RWPE1 (cell line): ENCODE measurements at regions of chr1 and their contacts with region 1.

Region 1: DNA sequence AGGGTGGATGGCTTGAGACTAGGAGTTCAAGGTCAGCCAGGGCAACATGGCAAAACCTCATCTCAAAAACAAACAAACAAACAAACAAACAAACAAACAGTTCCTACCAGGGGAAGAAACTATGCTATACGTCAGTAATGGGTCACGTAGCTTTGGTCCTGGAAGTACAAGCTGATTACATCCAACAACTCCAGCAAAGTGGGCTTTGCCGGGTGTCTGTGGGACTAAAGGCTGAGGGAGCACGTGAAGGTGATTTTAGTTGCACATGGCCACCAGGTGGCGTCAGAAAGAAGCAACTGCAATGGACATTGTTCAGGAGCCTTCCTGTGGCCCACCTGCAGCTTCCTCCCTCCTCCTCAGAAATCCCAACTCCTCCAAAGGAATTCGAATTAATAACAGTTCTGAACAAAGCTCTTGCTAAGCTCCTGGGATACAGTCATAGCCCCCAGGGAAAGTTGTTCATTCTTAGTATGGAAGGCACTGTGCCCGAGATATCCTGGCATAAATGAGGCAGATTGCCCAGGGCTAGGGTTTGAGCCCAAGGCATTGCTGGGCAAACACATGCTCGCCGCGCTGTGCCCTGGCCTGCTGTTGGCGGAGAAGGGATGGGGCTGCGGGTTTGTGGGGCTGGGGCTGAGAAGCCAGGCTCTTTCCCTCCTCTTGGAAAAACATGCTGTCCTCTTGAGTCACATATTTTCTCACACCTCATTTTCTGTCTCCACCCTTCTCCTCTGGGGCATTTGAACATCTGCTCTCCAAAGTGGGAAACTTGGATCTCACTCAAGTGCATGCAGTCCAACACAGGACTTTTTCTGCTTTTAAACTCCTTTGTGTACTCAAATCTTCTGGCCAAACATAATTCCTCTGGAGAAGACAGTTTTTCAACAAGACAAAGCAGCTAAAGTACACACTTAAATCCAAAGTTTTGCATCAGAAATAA is 28.6 kb downstream of the AKNAD1 start:
- DNase-seq: peak; percentile 96
- H3K27ac ChIP-seq: peak overlapping the region; percentile 100
- CTCF ChIP-seq: peak; percentile 82

Region 2: DNA sequence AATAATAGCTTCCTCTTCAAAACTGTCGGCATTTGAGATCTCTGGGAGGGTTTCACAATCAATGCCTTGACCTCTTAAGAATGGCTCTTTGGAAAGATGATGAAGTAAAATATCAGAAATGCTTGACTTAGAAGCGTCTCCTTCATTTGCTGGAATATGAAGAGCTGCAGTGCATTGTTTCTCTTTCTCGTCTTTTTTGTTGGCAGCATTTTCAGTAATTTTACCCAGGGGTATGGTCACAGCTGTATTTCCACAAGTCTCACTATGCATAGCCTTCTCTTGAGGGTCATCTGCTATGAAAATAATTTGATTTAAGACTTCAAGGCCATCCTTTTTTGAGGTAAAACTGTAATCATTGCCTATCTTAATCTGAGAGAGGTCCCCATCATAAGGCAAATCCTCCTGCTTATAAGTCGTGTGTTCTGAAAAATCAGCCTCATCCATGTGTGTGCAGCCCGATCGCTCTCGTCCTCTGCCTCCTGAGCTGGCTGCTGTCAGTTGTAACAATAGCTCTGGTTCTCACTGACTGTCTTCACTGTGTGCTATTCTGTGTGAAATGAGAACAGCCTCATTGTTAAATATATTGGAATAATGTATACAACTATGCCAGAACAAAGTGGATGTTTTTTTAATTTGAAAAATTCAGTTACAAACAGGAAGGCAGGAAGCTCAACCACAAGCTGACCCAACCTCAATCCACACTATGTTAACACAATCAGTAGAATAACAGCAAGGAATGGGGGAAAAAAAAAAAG is 24.1 kb after region 1 on chr1:
- CTCF ChIA-PET with region 1: no interaction called
- POLR2A ChIA-PET with region 1: no interaction called
- DNase-seq: no peak
- H3K27ac ChIP-seq: no peak overlapping the region
- CTCF ChIP-seq: no peak

Region 3: GRCh38 chr1:108882837-108883236 is 54.5 kb after region 1 on chr1:
- CTCF ChIA-PET with region 1: interaction called, 11 read pairs
- POLR2A ChIA-PET with region 1: interaction called, 4 read pairs
- DNase-seq: no peak
- H3K27ac ChIP-seq: no peak overlapping the region
- CTCF ChIP-seq: no peak

Region 4: GRCh38 chr1:108897865-108898720 is 69.8 kb after region 1 on chr1:
- CTCF ChIA-PET with region 1: interaction called, 36 read pairs
- POLR2A ChIA-PET with region 1: no interaction called
- DNase-seq: peak; percentile 46
- H3K27ac ChIP-seq: no peak overlapping the region
- CTCF ChIP-seq: peak; percentile 73